MCF 10A (cell line): ENCODE measurements at regions of chr17 and their contacts with region 1.

Region 1: DNA sequence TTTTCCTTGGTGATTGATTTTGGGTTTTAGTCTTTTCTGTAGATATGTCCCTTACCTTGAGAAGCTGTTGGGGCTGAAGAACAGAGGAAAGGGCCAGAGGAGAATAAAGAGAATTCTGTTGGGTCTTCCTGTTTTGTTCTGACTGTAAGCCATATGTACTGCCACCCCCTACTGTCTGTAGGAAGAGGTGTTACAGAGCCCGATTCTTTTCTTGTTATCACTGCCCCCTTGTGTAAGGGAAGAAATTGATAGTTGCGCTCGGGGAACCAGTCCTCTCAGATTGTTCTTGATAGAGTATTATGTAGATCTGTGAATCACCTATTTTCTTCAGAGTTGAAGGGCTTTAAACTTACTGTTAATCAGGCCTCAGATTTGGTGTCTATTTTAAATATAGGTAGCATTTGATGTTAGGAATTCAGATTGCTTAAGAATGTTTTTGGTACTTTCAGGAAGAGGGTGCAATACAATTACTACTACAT is 2.4 kb downstream of the TANC2 start:
- DNase-seq: peak; percentile 89
- H3K4me3 Mint-ChIP-seq: peak overlapping the region; percentile 61
- H3K27ac Mint-ChIP-seq: no peak overlapping the region
- H3K4me1 Mint-ChIP-seq: peaks cover 27% of the 10 kb centered on the region
- H3K27me3 Mint-ChIP-seq: no peaks in the 10 kb centered on the region
- CTCF ChIP-seq: peak; percentile 87

Region 2: DNA sequence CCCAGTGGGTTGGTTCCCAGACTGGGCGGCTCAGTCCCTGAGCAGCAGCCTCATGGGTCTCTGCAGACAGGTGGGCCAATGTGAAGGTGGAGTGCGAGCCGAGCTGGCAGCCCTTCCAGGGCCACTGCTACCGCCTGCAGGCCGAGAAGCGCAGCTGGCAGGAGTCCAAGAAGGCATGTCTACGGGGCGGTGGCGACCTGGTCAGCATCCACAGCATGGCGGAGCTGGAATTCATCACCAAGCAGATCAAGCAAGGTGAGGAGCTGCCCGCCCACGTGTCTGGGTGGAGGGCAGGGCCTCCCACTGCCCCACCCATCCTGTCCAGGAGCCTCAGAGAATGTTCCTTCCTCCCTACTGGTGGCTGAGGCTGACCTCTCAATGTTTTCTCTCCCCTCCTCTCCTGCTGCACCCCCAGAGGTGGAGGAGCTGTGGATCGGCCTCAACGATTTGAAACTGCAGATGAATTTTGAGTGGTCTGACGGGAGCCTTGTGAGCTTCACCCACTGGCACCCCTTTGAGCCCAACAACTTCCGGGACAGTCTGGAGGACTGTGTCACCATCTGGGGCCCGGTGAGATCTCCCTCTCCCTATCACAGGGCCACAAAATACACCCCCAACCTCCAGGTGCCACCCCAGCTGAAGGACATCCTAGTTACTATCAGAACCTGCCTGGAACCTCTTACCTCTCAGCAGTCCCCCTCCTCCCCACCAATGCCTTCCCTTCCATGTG is 296.7 kb before region 1 on chr17:
- CTCF ChIA-PET with region 1: interaction called, 5 read pairs
- POLR2A ChIA-PET with region 1: interaction called, 4 read pairs
- intact Hi-C with region 1: loop called (anchors 1 kb)
- DNase-seq: peak; percentile 85
- H3K4me3 Mint-ChIP-seq: peak overlapping the region; percentile 63
- H3K27ac Mint-ChIP-seq: peak overlapping the region; percentile 89
- H3K4me1 Mint-ChIP-seq: peaks cover 28% of the 10 kb centered on the region
- H3K27me3 Mint-ChIP-seq: no peaks in the 10 kb centered on the region
- CTCF ChIP-seq: no peak

Region 3: DNA sequence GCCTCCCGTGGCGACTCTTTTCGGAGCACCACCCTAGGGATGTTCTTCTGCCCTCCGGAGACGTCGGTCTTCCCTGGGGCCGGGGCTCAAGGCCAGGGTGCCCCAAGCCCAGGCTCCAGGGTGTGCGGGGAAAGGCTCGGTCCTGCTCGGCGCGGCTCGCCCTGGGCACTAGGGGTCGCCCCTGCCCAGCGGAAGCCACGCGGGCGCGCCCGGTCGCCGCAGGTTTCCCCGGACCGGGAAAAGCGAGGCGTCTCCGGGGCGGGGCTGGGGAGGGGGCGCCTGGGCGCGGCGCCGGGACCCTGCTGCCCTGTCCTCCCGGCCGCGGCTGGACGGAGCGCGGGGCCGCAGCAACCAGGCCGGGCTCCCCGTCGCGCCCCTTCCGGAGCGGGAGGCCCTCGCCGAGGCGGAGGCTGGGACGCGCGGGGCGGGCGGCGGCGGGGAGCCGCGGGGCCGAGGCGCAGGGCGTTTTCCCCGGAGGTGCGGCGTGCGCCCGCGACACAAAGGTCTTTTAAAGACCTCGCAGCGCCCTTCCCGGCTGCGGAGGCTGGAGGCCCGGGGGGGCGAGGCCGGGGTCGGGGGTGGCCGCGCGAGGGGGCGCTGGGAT is 264.6 kb before region 1 on chr17:
- CTCF ChIA-PET with region 1: interaction called, 9 read pairs
- POLR2A ChIA-PET with region 1: interaction called, 30 read pairs
- intact Hi-C with region 1: loop called (anchors 1 kb)
- DNase-seq: peak; percentile 75
- H3K4me3 Mint-ChIP-seq: peak overlapping the region; percentile 74
- H3K27ac Mint-ChIP-seq: peak overlapping the region; percentile 15
- H3K4me1 Mint-ChIP-seq: peaks cover 7% of the 10 kb centered on the region
- H3K27me3 Mint-ChIP-seq: no peaks in the 10 kb centered on the region
- CTCF ChIP-seq: peak; percentile 88

Region 4: DNA sequence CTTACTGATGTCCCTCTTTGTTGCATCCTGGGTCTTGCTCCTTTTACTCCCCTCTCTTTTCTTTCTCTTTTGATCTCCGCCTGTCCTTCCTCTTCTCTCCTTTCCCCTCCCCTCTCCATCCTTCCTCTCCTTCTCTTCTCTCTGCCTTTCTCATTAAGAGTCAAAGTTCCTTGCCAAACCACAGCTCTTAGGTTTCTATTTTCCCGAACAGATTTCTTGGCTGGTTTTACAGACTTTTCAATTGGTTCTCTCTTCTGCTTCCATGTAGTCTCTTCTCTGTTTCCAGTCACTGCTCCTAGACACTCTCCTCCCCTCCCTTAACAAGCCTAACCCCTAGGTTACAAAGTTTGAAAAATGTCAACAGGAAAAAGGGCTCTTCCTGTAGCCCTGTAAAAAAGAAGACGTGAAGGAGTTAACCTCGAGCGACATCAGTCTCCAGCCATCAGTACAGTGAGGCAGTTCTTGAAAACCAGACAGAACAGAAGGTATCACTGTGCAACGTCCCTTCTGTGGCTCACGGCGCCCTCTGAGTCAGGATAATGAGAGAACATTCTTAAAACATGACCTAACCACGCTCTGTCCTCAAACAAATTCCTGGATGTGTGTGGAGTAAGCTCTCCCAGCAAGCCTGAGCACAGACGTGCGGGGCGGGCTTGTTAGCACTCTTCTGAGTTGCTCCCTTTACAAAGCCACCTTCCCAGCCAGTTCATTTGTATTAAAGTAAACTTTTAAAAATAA is 148.8 kb before region 1 on chr17:
- CTCF ChIA-PET with region 1: interaction called, 7 read pairs
- POLR2A ChIA-PET with region 1: interaction called, 19 read pairs
- intact Hi-C with region 1: loop called (anchors 1 kb)
- DNase-seq: peak; percentile 95
- H3K4me3 Mint-ChIP-seq: peak overlapping the region; percentile 50
- H3K27ac Mint-ChIP-seq: peak overlapping the region; percentile 91
- H3K4me1 Mint-ChIP-seq: peaks cover 34% of the 10 kb centered on the region
- H3K27me3 Mint-ChIP-seq: no peaks in the 10 kb centered on the region
- CTCF ChIP-seq: no peak

Region 5: DNA sequence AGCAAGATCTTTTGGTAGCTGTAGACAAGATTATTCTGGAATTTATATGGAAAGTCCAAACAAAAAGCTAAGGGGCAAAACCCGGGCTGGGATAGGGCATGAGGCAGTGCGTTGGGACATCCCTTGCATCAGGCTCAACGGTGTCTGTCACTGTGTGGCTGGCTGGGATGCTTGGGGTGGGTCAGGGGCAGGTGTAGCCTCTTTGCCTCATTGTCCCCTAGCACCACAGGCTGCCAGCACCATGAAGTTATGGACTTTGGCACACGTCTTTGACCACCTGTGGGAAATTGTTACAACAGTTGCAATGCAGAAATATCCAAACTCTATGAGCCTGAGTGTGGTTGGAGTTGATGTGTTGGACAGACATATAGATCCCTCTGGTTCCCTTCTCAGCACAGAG is 127.6 kb before region 1 on chr17:
- CTCF ChIA-PET with region 1: no interaction called
- POLR2A ChIA-PET with region 1: no interaction called
- intact Hi-C with region 1: no loop called
- DNase-seq: no peak
- H3K4me3 Mint-ChIP-seq: no peak overlapping the region
- H3K27ac Mint-ChIP-seq: no peak overlapping the region
- H3K4me1 Mint-ChIP-seq: no peaks in the 10 kb centered on the region
- H3K27me3 Mint-ChIP-seq: no peaks in the 10 kb centered on the region
- CTCF ChIP-seq: no peak

Region 6: GRCh38 chr17:62876673-62877401 is 91.6 kb before region 1 on chr17:
- CTCF ChIA-PET with region 1: interaction called, 4 read pairs
- POLR2A ChIA-PET with region 1: interaction called, 15 read pairs
- intact Hi-C with region 1: loop called (anchors 5 kb)
- DNase-seq: peak; percentile 61
- H3K4me3 Mint-ChIP-seq: no peak overlapping the region
- H3K27ac Mint-ChIP-seq: peak overlapping the region; percentile 54
- H3K4me1 Mint-ChIP-seq: peaks cover 14% of the 10 kb centered on the region
- H3K27me3 Mint-ChIP-seq: no peaks in the 10 kb centered on the region
- CTCF ChIP-seq: no peak

Region 7: DNA sequence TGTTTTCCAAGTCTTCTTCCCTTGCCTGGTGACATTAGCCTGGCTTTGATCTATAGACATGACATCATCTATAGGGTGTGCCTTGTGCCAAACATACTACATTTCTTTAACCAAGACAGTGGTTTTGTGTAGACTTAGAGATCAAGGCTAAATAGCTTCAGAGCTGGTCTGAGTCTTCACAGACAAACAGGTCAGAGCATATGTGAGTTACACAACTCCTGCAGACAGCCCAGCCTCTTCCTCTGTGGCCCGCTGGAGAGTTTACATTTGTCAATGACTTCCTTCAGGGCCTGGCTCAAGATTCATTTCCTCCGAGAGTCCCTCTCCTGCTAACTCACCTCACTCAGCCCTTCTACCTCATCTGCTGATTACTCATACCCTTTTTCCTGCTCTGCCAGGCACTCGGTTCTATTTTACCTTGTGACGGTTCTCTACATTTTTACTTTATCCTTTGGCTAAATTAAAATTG is 75.6 kb before region 1 on chr17:
- CTCF ChIA-PET with region 1: interaction called, 3 read pairs
- POLR2A ChIA-PET with region 1: interaction called, 11 read pairs
- intact Hi-C with region 1: loop called (anchors 2 kb)
- DNase-seq: peak; percentile 96
- H3K4me3 Mint-ChIP-seq: peak overlapping the region; percentile 44
- H3K27ac Mint-ChIP-seq: peak overlapping the region; percentile 81
- H3K4me1 Mint-ChIP-seq: peaks cover 17% of the 10 kb centered on the region
- H3K27me3 Mint-ChIP-seq: no peaks in the 10 kb centered on the region
- CTCF ChIP-seq: no peak

Region 8: DNA sequence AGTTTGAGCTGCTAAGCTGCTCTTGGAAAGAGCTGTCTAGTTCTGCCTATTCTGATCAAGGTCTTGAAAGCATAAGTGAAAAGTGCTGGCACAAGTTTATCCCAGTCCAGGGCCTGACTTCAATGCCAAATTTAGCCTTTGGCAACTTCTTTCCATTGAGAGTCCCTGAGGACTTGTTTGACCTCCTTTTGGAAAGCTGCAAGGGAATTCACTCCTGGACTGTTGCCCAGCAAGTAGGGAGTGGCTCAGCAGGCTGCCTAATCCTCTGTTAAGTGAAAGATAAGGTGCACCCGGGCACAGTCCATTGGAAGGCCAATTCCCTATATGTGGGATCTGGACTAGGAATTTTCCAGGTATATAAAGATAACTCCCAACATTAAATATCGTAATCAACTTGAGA is 18.4 kb before region 1 on chr17:
- CTCF ChIA-PET with region 1: no interaction called
- POLR2A ChIA-PET with region 1: no interaction called
- intact Hi-C with region 1: no loop called
- DNase-seq: peak; percentile 94
- H3K4me3 Mint-ChIP-seq: no peak overlapping the region
- H3K27ac Mint-ChIP-seq: no peak overlapping the region
- H3K4me1 Mint-ChIP-seq: peaks cover 8% of the 10 kb centered on the region
- H3K27me3 Mint-ChIP-seq: no peaks in the 10 kb centered on the region
- CTCF ChIP-seq: no peak